Natural killer cell (primary cell): ENCODE measurements at regions of chr13 and their contacts with region 1.

Region 1: GRCh38 chr13:98609756-98610155 is 32.8 kb upstream of the STK24 start:
- DNase-seq: no peak
- ATAC-seq: no peak
- H3K4me3 ChIP-seq: no peak overlapping the region
- H3K4me3 Mint-ChIP-seq: no peak overlapping the region
- H3K27ac ChIP-seq: no peak overlapping the region
- H3K27ac Mint-ChIP-seq: no peak overlapping the region
- H3K4me1 ChIP-seq: no peaks in the 10 kb centered on the region
- H3K4me1 Mint-ChIP-seq: no peaks in the 10 kb centered on the region
- H3K27me3 ChIP-seq: no peaks in the 10 kb centered on the region
- H3K27me3 Mint-ChIP-seq: peaks cover 12 to 34% of the 10 kb centered on the region in 2 donors
- CTCF ChIP-seq: no peak

Region 2: GRCh38 chr13:98570929-98571372 is 38.8 kb before region 1 on chr13:
- intact Hi-C with region 1: no loop called
- DNase-seq: peak in 1 of 2 donors; percentile 73
- ATAC-seq: peak; percentile 63 to 77 (median 74)
- H3K4me3 ChIP-seq: peak overlapping the region; percentile 35
- H3K4me3 Mint-ChIP-seq: peak overlapping the region; percentile 87
- H3K27ac ChIP-seq: peak overlapping the region; percentile 68
- H3K27ac Mint-ChIP-seq: peak overlapping the region; percentile 70 to 86
- H3K4me1 ChIP-seq: peaks cover 47% of the 10 kb centered on the region
- H3K4me1 Mint-ChIP-seq: peaks cover 89 to 93% of the 10 kb centered on the region in 2 donors
- H3K27me3 ChIP-seq: no peaks in the 10 kb centered on the region
- H3K27me3 Mint-ChIP-seq: no peaks in the 10 kb centered on the region
- CTCF ChIP-seq: no peak

Region 3: GRCh38 chr13:98598043-98598442 is 11.7 kb before region 1 on chr13:
- intact Hi-C with region 1: loop called (anchors 1 kb)
- DNase-seq: peak in 1 of 2 donors; percentile 11
- ATAC-seq: no peak
- H3K4me3 ChIP-seq: no peak overlapping the region
- H3K4me3 Mint-ChIP-seq: no peak overlapping the region
- H3K27ac ChIP-seq: no peak overlapping the region
- H3K27ac Mint-ChIP-seq: no peak overlapping the region
- H3K4me1 ChIP-seq: no peaks in the 10 kb centered on the region
- H3K4me1 Mint-ChIP-seq: peaks cover 0 to 5% of the 10 kb centered on the region in 2 donors
- H3K27me3 ChIP-seq: no peaks in the 10 kb centered on the region
- H3K27me3 Mint-ChIP-seq: peaks cover 23 to 29% of the 10 kb centered on the region in 2 donors
- CTCF ChIP-seq: no peak